Endothelial cell of umbilical vein (primary cell): ENCODE measurements at regions of chr1 and their contacts with region 1.

Region 1: DNA sequence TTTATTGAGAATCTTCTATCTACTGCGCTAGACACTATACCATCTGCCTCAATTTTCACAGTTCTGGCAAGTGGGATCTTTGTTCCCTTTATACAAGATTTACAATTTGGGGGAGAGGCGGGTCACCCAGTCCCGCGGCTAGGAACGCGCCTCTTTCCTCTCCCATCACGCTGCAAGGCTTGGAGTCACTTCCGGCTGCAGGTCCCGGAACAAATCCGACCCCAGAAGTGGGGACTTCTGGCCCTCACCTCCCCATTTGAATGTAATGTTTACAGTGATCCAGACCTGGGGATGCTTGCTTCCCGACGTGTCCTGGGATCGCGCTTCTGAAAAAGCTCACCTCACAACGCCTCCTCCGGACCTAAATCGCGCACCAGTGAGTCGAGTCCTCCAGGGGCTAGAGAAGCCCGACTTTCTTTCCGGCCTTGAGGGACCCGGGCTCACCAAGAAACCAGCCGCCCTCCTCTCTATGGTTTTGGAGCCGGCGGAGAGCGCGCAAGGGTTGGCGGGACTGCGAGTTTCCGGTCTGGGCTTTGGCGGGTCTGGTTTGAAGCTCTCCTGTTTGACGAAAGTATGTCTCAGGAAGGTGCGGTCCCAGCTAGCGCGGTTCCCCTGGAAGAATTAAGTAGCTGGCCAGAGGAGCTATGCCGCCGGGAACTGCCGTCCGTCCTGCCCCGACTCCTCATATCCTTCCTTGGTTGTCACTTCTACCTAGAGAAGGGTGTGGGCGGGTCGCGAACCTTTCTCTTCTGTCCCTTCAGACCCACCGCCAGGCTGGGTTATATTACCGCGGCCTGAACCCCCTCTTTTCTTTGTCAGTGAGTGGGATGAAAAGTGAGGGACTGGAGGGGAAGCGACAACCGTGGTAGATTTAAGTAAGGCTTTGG is at the start of gene METTL18:
- DNase-seq: peak; percentile 97
- H3K4me3 ChIP-seq: peak within 1 kb of the TSS; percentile 29 to 92 (median 77)
- H3K27ac ChIP-seq: peak within 1 kb of the TSS; percentile 66
- H3K4me1 ChIP-seq: peaks cover 11% of the 10 kb centered on the region
- H3K27me3 ChIP-seq: no peaks in the 10 kb centered on the region
- CTCF ChIP-seq: peak in 1 of 2 donors; percentile 48
- POLR2A ChIP-seq: peak; percentile 56
- total RNA-seq, gene METTL18: 6.6 TPM in 2 replicates

Region 2: GRCh38 chr1:169367486-169368405 is 427.0 kb before region 1 on chr1 and contains the starts of genes BLZF1 and NME7:
- CTCF ChIA-PET with region 1: no interaction called
- POLR2A ChIA-PET with region 1: no interaction called
- dilution Hi-C with region 1: no loop called
- intact Hi-C with region 1: loop called (anchors 10 kb)
- DNase-seq: peak; percentile 98
- H3K4me3 ChIP-seq: peak within 1 kb of the TSS; percentile 97 to 100 (median 98)
- H3K27ac ChIP-seq: peak within 1 kb of the TSS; percentile 96
- H3K4me1 ChIP-seq: peaks cover 19% of the 10 kb centered on the region
- H3K27me3 ChIP-seq: no peaks in the 10 kb centered on the region
- CTCF ChIP-seq: no peak
- POLR2A ChIP-seq: peak; percentile 84
- total RNA-seq, gene BLZF1: 19.7 and 21.2 TPM in 2 replicates
- total RNA-seq, gene NME7: 25.0 and 25.3 TPM in 2 replicates

Region 3: GRCh38 chr1:169694304-169695075 is 100.3 kb before region 1 on chr1:
- CTCF ChIA-PET with region 1: no interaction called
- POLR2A ChIA-PET with region 1: no interaction called
- dilution Hi-C with region 1: no loop called
- intact Hi-C with region 1: no loop called
- DNase-seq: peak; percentile 16
- H3K4me3 ChIP-seq: no peak overlapping the region
- H3K27ac ChIP-seq: no peak overlapping the region
- H3K4me1 ChIP-seq: peaks cover 5% of the 10 kb centered on the region
- H3K27me3 ChIP-seq: no peaks in the 10 kb centered on the region
- CTCF ChIP-seq: no peak
- POLR2A ChIP-seq: no peak

Region 4: DNA sequence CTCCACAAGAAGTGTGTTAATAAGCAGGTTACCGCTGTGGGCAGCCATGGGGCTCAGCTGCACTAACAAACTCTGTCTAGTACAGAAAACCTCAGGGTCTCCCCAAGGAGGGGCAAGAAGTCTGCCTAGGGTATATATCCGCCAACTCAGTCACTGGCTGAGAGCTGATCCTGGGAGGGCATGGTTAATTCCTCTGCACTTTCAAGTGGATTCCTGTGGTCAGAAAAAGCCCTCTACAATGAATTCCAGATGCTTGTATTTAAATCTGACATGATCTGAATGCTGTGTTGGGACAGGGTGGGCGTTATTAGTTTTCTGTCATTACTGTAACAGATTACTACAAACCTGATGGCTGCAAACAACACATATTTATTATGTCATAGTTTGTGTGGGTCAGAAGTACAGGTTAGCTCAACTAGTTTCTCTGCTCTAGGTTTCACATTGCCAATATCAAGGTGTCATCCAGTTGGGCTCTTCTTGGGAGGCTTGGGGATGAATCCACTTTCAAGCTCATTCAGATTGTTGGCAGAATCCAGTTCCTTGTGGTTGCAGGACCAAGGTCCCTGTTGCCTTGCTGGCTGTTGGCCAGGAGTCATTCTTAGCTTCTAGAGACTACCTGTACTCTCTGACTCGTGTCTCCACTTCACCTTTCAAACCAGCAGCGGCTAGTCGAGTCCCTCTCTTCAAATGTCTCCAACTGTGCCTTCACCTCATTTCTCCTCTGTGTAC is 52.9 kb before region 1 on chr1:
- CTCF ChIA-PET with region 1: interaction called, 4 read pairs
- POLR2A ChIA-PET with region 1: no interaction called
- dilution Hi-C with region 1: no loop called
- intact Hi-C with region 1: loop called (anchors 1 kb)
- DNase-seq: no peak
- H3K4me3 ChIP-seq: no peak overlapping the region
- H3K27ac ChIP-seq: no peak overlapping the region
- H3K4me1 ChIP-seq: peaks cover 26% of the 10 kb centered on the region
- H3K27me3 ChIP-seq: no peaks in the 10 kb centered on the region
- CTCF ChIP-seq: no peak
- POLR2A ChIP-seq: no peak

Region 5: GRCh38 chr1:169809370-169810095 is 14.8 kb after region 1 on chr1:
- CTCF ChIA-PET with region 1: interaction called, 33 read pairs
- POLR2A ChIA-PET with region 1: no interaction called
- dilution Hi-C with region 1: no loop called
- intact Hi-C with region 1: no loop called
- DNase-seq: peak; percentile 58
- H3K4me3 ChIP-seq: no peak overlapping the region
- H3K27ac ChIP-seq: no peak overlapping the region
- H3K4me1 ChIP-seq: no peaks in the 10 kb centered on the region
- H3K27me3 ChIP-seq: no peaks in the 10 kb centered on the region
- CTCF ChIP-seq: peak in 1 of 2 donors; percentile 23
- POLR2A ChIP-seq: no peak

Region 6: DNA sequence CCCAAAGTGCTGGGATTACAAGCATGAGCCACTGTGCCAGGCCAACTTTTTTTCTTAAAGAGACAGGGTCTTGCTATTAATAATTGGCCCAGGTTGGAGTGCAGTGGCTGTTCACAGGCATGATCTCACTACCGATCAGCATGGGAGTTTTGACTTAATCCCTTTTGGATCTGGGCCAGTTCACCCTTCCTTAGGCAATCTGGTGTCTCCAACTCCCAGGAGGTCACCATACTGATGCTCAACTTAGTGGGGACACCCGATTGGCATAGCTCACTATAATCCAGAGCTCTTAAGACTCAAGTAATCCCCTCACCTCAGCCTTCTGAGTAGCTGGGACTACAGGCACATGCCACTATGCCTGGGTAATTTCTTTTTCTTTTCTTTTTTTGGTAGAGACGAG is 163.1 kb after region 1 on chr1:
- CTCF ChIA-PET with region 1: no interaction called
- POLR2A ChIA-PET with region 1: no interaction called
- dilution Hi-C with region 1: no loop called
- intact Hi-C with region 1: no loop called
- DNase-seq: no peak
- H3K4me3 ChIP-seq: no peak overlapping the region
- H3K27ac ChIP-seq: no peak overlapping the region
- H3K4me1 ChIP-seq: no peaks in the 10 kb centered on the region
- H3K27me3 ChIP-seq: no peaks in the 10 kb centered on the region
- CTCF ChIP-seq: no peak
- POLR2A ChIP-seq: no peak